HEK293 (cell line): ENCODE measurements at regions of chr2 and their contacts with region 1.

Region 1: GRCh38 chr2:206800506-206801417 is 35.4 kb downstream of the FASTKD2 start:
- H3K4me3 ChIP-seq: no peak overlapping the region
- H3K27ac ChIP-seq: no peak overlapping the region
- H3K4me1 ChIP-seq: no peaks in the 10 kb centered on the region
- CTCF ChIP-seq: peak; percentile 66; the same call in 1 of the 2 replicates

Region 2: GRCh38 chr2:206693399-206694137 is 107.2 kb before region 1 on chr2:
- CTCF ChIA-PET with region 1: interaction called, 13 read pairs
- POLR2A ChIA-PET with region 1: no interaction called
- H3K4me3 ChIP-seq: no peak overlapping the region
- H3K27ac ChIP-seq: no peak overlapping the region
- H3K4me1 ChIP-seq: no peaks in the 10 kb centered on the region
- CTCF ChIP-seq: peak; percentile 45; the same call in 1 of the 2 replicates

Region 3: DNA sequence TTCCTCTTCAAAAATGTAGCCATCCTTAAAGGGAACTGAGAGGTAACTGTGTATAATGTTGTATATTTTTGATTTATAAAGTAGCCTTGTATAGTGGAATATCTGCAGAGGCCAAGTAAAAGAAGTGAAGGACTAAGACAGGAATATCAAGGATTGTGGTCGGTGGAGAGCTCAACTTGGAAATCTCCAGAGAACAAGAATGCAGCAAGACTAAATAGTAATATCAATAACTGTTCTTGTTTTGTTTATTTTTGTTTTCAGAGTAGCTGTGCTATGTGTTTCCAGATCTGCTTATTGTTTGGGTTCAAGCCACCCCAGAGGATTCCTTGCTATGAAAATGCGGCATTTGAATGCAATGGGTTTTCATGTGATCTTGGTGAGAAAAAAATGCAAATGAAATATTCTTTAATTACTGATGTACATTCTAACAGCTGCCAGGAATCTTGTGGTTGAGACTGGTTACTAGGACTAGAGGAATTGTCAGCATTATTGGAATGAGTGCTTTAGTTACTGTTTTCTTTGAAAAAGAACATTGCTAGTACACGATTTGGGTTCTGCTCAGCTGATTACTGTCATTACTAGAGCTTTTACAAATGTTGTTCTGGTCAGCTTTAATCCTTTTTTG is 10.3 kb before region 1 on chr2:
- CTCF ChIA-PET with region 1: interaction called, 11 read pairs
- POLR2A ChIA-PET with region 1: no interaction called
- H3K4me3 ChIP-seq: no peak overlapping the region
- H3K27ac ChIP-seq: no peak overlapping the region
- H3K4me1 ChIP-seq: no peaks in the 10 kb centered on the region
- CTCF ChIP-seq: no peak